Breast epithelium (tissue), 4 donors: ENCODE measurements at regions of chr3 and their contacts with region 1.

Region 1: DNA sequence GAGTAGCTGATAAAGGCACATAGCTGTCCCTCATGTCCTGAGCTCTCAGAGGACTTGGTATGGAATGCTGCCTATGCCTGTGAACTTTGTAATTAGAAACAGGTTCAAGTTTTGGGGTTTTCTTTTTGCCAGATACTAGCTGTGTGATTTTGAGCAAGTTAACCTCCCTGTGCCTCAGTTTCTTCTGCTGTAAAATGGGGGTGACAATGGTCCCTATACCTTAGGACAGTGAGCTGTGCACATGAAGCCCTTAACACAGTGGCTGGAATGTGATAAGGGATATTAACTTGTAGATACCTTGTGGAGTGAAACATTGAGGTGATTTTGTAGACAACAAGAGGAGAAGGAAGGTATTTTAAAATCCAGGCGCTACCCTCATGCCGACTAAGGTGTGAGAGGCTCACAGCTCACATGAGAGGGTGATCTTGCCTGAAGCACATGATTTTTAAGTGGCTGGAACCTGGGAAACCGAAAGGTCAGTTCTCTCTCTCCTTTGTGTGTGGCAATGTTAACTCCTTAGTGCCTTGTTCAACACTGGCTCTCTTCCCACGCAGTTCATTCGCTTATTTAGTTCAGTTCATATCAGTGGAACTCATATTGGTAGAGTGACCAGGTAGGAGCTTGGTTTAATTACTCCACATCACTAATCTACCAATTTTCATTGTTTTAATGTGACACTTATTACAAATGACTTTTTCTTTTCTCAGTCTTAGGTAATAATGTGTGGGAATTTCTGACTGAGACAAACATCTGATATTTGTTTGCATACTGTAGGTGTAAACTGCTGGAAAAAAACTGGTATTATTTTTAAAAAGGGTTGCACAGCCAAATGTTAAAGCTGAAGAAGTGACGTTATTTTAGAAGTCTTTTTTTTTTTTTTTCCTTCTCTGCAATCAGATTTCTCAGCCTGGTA is 236.2 kb downstream of the ITPR1 start:
- DNase-seq: no peak
- H3K4me3 ChIP-seq: no peak overlapping the region
- H3K27ac ChIP-seq: peak overlapping the region; percentile 41 to 49
- H3K4me1 ChIP-seq: no peaks in the 10 kb centered on the region
- H3K27me3 ChIP-seq: no peaks in the 10 kb centered on the region
- CTCF ChIP-seq: no peak
- POLR2A ChIP-seq: no peak

Region 2: GRCh38 chr3:4776980-4777581 is 47.8 kb after region 1 on chr3:
- intact Hi-C with region 1: no loop called
- DNase-seq: no peak
- H3K4me3 ChIP-seq: no peak overlapping the region
- H3K27ac ChIP-seq: peak overlapping the region; percentile 83
- H3K4me1 ChIP-seq: peaks cover 2 to 27% of the 10 kb centered on the region in 2 donors
- H3K27me3 ChIP-seq: no peaks in the 10 kb centered on the region
- CTCF ChIP-seq: no peak
- POLR2A ChIP-seq: no peak

Region 3: GRCh38 chr3:4978204-4978965 is 249.1 kb after region 1 on chr3:
- intact Hi-C with region 1: loop called (anchors 5 kb)
- DNase-seq: peak; percentile 95 to 97
- H3K4me3 ChIP-seq: peak overlapping the region; percentile 82 to 96 (median 95)
- H3K27ac ChIP-seq: peak overlapping the region; percentile 97 to 100
- H3K4me1 ChIP-seq: peaks cover 0 to 17% of the 10 kb centered on the region in 2 donors
- H3K27me3 ChIP-seq: no peaks in the 10 kb centered on the region
- CTCF ChIP-seq: peak in 1 of 3 donors; percentile 5
- POLR2A ChIP-seq: no peak

Region 4: GRCh38 chr3:5675319-5675718 is 946.0 kb after region 1 on chr3:
- intact Hi-C with region 1: no loop called
- DNase-seq: no peak
- H3K4me3 ChIP-seq: no peak overlapping the region
- H3K27ac ChIP-seq: no peak overlapping the region
- H3K4me1 ChIP-seq: no peaks in the 10 kb centered on the region
- H3K27me3 ChIP-seq: no peaks in the 10 kb centered on the region
- CTCF ChIP-seq: no peak
- POLR2A ChIP-seq: no peak